Activated naive CD8-positive, alpha-beta T cell treated with anti-CD3 and anti-CD28 coated beads, Interleukin-2, amount 10 ng/mL, durations not matched to agents 7 days and 5 days (primary cell): ENCODE measurements at regions of chr11 and their contacts with region 1.

Region 1: GRCh38 chr11:9460322-9461067 is at the start of gene ZNF143:
- DNase-seq: peak; percentile 99
- ATAC-seq: peak; percentile 91
- H3K4me3 Mint-ChIP-seq: peak within 1 kb of the TSS; percentile 95
- H3K27ac Mint-ChIP-seq: peak within 1 kb of the TSS; percentile 95
- H3K4me1 Mint-ChIP-seq: peaks cover 20% of the 10 kb centered on the region
- H3K27me3 Mint-ChIP-seq: no peaks in the 10 kb centered on the region
- total RNA-seq, gene ZNF143: 37.7 to 48.8 TPM

Region 2: GRCh38 chr11:9428706-9429105 is 31.8 kb before region 1 on chr11:
- POLR2A ChIA-PET with region 1: no interaction called
- DNase-seq: no peak
- ATAC-seq: no peak
- H3K4me3 Mint-ChIP-seq: no peak overlapping the region
- H3K27ac Mint-ChIP-seq: no peak overlapping the region
- H3K4me1 Mint-ChIP-seq: no peaks in the 10 kb centered on the region
- H3K27me3 Mint-ChIP-seq: no peaks in the 10 kb centered on the region

Region 3: GRCh38 chr11:9473408-9473807 is 12.9 kb after region 1 on chr11:
- POLR2A ChIA-PET with region 1: interaction called, 10 read pairs
- DNase-seq: no peak
- ATAC-seq: no peak
- H3K4me3 Mint-ChIP-seq: no peak overlapping the region
- H3K27ac Mint-ChIP-seq: no peak overlapping the region
- H3K4me1 Mint-ChIP-seq: no peaks in the 10 kb centered on the region
- H3K27me3 Mint-ChIP-seq: no peaks in the 10 kb centered on the region